Natural killer cell (primary cell): ENCODE measurements at regions of chr3 and their contacts with region 1.

Region 1: DNA sequence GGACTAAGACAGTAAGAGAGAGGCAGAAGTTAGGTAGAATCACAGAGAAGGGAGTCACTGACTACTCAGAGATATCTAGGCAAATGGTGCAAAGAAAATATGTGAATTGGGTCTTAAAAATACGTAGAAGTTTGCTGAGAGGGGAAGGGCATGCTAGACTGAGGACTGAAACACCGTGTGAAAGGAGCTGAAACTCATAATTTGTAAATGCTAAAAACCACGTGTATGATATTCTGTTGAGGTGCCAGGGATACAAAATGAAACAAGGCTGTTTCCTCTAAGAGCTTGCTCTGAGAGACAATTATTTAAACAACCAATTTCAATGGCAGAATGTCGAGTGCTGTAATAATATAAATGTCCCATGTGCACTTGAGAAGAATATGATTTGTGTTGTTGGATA is 47.2 kb downstream of the NCK1 start:
- DNase-seq: peak in 1 of 2 donors; percentile 32
- ATAC-seq: peak; percentile 73 to 86 (median 83)
- H3K4me3 ChIP-seq: no peak overlapping the region
- H3K4me3 Mint-ChIP-seq: peak overlapping the region; percentile 64
- H3K27ac ChIP-seq: peak overlapping the region; percentile 82
- H3K27ac Mint-ChIP-seq: peak overlapping the region; percentile 88 to 98
- H3K4me1 ChIP-seq: peaks cover 43% of the 10 kb centered on the region
- H3K4me1 Mint-ChIP-seq: peaks cover 80 to 89% of the 10 kb centered on the region in 2 donors
- H3K27me3 ChIP-seq: no peaks in the 10 kb centered on the region
- H3K27me3 Mint-ChIP-seq: no peaks in the 10 kb centered on the region
- CTCF ChIP-seq: no peak

Region 2: GRCh38 chr3:136919799-136920580 is 10.8 kb after region 1 on chr3:
- intact Hi-C with region 1: loop called (anchors 1 kb)
- DNase-seq: peak in 1 of 2 donors; percentile 84
- ATAC-seq: peak; percentile 80 to 91 (median 90)
- H3K4me3 ChIP-seq: no peak overlapping the region
- H3K4me3 Mint-ChIP-seq: peak overlapping the region; percentile 78
- H3K27ac ChIP-seq: peak overlapping the region; percentile 90
- H3K27ac Mint-ChIP-seq: peak overlapping the region; percentile 97 to 98
- H3K4me1 ChIP-seq: peaks cover 15% of the 10 kb centered on the region
- H3K4me1 Mint-ChIP-seq: peaks cover 85 to 89% of the 10 kb centered on the region in 2 donors
- H3K27me3 ChIP-seq: no peaks in the 10 kb centered on the region
- H3K27me3 Mint-ChIP-seq: no peaks in the 10 kb centered on the region
- CTCF ChIP-seq: no peak

Region 3: GRCh38 chr3:136938334-136938733 is 29.1 kb after region 1 on chr3:
- intact Hi-C with region 1: loop called (anchors 5 kb)
- DNase-seq: no peak
- ATAC-seq: peak in 2 of 3 donors; percentile 42 to 72
- H3K4me3 ChIP-seq: no peak overlapping the region
- H3K4me3 Mint-ChIP-seq: no peak overlapping the region
- H3K27ac ChIP-seq: no peak overlapping the region
- H3K27ac Mint-ChIP-seq: peak overlapping the region; percentile 80 to 86
- H3K4me1 ChIP-seq: peaks cover 20% of the 10 kb centered on the region
- H3K4me1 Mint-ChIP-seq: peaks cover 62 to 73% of the 10 kb centered on the region in 2 donors
- H3K27me3 ChIP-seq: no peaks in the 10 kb centered on the region
- H3K27me3 Mint-ChIP-seq: no peaks in the 10 kb centered on the region
- CTCF ChIP-seq: no peak